ENCODE measurements at regions of chr17 and their contacts with region 1.

Region 1: DNA sequence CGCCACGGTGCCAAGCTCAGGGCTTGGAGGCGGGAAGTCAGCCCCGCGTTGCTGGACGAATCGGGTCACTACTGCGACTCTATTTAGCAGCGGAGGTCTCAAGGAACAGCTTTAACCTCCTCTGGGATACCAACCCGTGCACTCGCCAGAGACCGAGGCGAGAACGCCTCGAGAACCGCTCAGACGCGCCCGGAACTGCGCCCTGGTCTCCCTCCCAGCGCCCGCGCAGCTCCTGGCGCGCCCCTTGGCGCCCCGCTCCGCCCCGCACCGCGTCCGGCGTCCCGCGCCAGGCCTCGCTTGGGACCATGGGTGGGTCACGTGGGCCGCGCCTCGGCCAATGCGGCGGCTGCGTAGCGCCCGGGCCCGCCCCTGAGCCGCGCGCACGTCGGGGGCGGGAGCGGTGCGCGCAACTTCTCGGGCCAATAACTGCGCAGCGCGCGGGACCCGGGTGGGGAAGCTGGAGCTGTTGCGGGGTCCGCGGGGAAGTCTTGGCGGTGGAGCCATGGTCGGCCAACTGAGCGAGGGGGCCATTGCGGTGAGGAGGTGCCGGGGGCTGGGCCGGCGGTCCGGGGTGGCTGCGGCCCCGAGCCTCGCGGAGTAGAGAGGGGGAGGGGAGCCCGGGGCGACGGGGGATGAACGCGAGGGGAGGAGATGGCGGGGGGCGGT is at the starts of genes RPA1 and SMYD4:
- DNase-seq: peak; percentile 93
- H3K4me3 Mint-ChIP-seq: peak within 1 kb of the TSS; percentile 89
- H3K27ac Mint-ChIP-seq: peak within 1 kb of the TSS; percentile 83
- H3K4me1 Mint-ChIP-seq: peaks cover 56% of the 10 kb centered on the region
- H3K27me3 Mint-ChIP-seq: no peaks in the 10 kb centered on the region
- total RNA-seq, gene RPA1: 159 to 168 TPM
- total RNA-seq, gene SMYD4: 14.5 to 15.8 TPM

Region 2: GRCh38 chr17:1684378-1685189 is 145.1 kb before region 1 on chr17 and contains the start of gene PRPF8:
- CTCF ChIA-PET with region 1: no interaction called
- POLR2A ChIA-PET with region 1: no interaction called
- intact Hi-C with region 1: loop called (anchors 1 kb)
- DNase-seq: peak; percentile 99
- H3K4me3 Mint-ChIP-seq: peak within 1 kb of the TSS; percentile 99
- H3K27ac Mint-ChIP-seq: peak within 1 kb of the TSS; percentile 95
- H3K4me1 Mint-ChIP-seq: peaks cover 30% of the 10 kb centered on the region
- H3K27me3 Mint-ChIP-seq: no peaks in the 10 kb centered on the region
- total RNA-seq, gene PRPF8: 370 to 378 TPM

Region 3: GRCh38 chr17:1709971-1710806 is 119.5 kb before region 1 on chr17 and contains the start of gene TLCD2:
- CTCF ChIA-PET with region 1: no interaction called
- POLR2A ChIA-PET with region 1: no interaction called
- intact Hi-C with region 1: no loop called
- DNase-seq: peak; percentile 30
- H3K4me3 Mint-ChIP-seq: peak within 1 kb of the TSS; percentile 50
- H3K27ac Mint-ChIP-seq: no peak within 1 kb of the TSS
- H3K4me1 Mint-ChIP-seq: peaks cover 24% of the 10 kb centered on the region
- H3K27me3 Mint-ChIP-seq: peaks cover 4% of the 10 kb centered on the region
- total RNA-seq, gene TLCD2: 0.85 to 0.86 TPM

Region 4: GRCh38 chr17:1871756-1872155 is 42.0 kb after region 1 on chr17:
- CTCF ChIA-PET with region 1: interaction called, 5 read pairs
- POLR2A ChIA-PET with region 1: no interaction called
- intact Hi-C with region 1: loop called (anchors 1 kb)
- DNase-seq: peak; percentile 20
- H3K4me3 Mint-ChIP-seq: no peak overlapping the region
- H3K27ac Mint-ChIP-seq: peak overlapping the region; percentile 51
- H3K4me1 Mint-ChIP-seq: peaks cover 50% of the 10 kb centered on the region
- H3K27me3 Mint-ChIP-seq: no peaks in the 10 kb centered on the region